ENCODE measurements at regions of chr6 and their contacts with region 1.

Region 1: GRCh38 chr6:20092071-20092566 is 120.2 kb downstream of the MBOAT1 start:
- DNase-seq: no peak
- H3K4me3 ChIP-seq: no peak overlapping the region
- H3K27ac ChIP-seq: no peak overlapping the region
- H3K4me1 ChIP-seq: no peaks in the 10 kb centered on the region
- H3K27me3 ChIP-seq: no peaks in the 10 kb centered on the region
- CTCF ChIP-seq: peak; percentile 64 to 86 (median 77)
- POLR2A ChIP-seq: no peak

Region 2: GRCh38 chr6:18601516-18602020 is 1490.6 kb before region 1 on chr6:
- intact Hi-C with region 1: loop called (anchors 5 kb)
- DNase-seq: no peak
- H3K4me3 ChIP-seq: no peak overlapping the region
- H3K27ac ChIP-seq: no peak overlapping the region
- H3K4me1 ChIP-seq: no peaks in the 10 kb centered on the region
- H3K27me3 ChIP-seq: no peaks in the 10 kb centered on the region
- CTCF ChIP-seq: no peak
- POLR2A ChIP-seq: no peak

Region 3: DNA sequence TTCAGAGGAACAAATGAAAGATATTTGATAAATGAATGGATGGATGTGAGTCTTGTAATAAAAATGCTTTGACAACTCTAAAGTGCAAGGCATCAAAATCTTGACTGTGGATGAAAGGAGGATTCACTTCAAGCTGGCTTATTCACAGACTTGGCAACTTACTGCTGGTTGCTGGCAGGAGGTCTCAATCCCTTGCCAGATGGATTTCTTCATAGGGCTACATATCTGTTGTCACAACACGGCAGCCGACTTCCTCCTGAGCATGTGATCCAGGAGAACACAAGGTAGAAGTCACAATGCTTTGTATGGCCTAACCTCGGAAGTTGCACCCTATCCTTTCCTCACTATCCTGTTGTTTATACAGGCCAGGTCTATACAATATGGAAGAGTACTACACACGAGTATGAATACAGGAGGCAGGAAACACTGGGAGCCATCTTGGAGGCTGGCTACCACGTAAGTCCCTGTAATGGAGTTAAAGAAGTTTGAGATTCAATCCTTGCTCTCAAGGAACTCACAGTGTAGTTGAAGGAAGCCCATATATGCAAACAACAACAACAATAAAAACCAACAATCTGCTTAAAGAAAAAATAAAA is 157.0 kb before region 1 on chr6:
- intact Hi-C with region 1: no loop called
- DNase-seq: peak in 1 of 2 donors; percentile 74
- H3K4me3 ChIP-seq: no peak overlapping the region
- H3K27ac ChIP-seq: peak overlapping the region in 1 of 2 donors; percentile 52
- H3K4me1 ChIP-seq: no peaks in the 10 kb centered on the region
- H3K27me3 ChIP-seq: no peaks in the 10 kb centered on the region
- CTCF ChIP-seq: no peak
- POLR2A ChIP-seq: no peak